ENCODE measurements at regions of chr12 and their contacts with region 1.

Region 1: GRCh38 chr12:116559162-116559935 is at the start of gene MAP1LC3B2:
- DNase-seq: peak; percentile 85 to 91 (median 89)
- H3K4me3 ChIP-seq: peak within 1 kb of the TSS; percentile 18 to 29
- H3K4me3 Mint-ChIP-seq: peak within 1 kb of the TSS; percentile 81 to 97 (median 86)
- H3K27ac ChIP-seq: peak within 1 kb of the TSS; percentile 33
- H3K27ac Mint-ChIP-seq: peak within 1 kb of the TSS; percentile 95 to 98 (median 97)
- H3K4me1 ChIP-seq: peaks cover 47% of the 10 kb centered on the region
- H3K4me1 Mint-ChIP-seq: peaks cover 29 to 48% (median 41%) of the 10 kb centered on the region in 4 donors
- H3K27me3 ChIP-seq: no peaks in the 10 kb centered on the region
- H3K27me3 Mint-ChIP-seq: no peaks in the 10 kb centered on the region
- total RNA-seq, gene MAP1LC3B2: 1.7 to 2.9 TPM

Region 2: GRCh38 chr12:116358893-116359761 is 200.2 kb before region 1 on chr12:
- CTCF ChIA-PET with region 1: no interaction called
- POLR2A ChIA-PET with region 1: interaction called, 16 read pairs
- intact Hi-C with region 1: no loop called
- DNase-seq: peak; percentile 62 to 86 (median 70)
- H3K4me3 ChIP-seq: peak overlapping the region; percentile 38 to 57
- H3K4me3 Mint-ChIP-seq: peak overlapping the region; percentile 74 to 89 (median 81)
- H3K27ac ChIP-seq: peak overlapping the region; percentile 9
- H3K27ac Mint-ChIP-seq: peak overlapping the region; percentile 29 to 94 (median 88)
- H3K4me1 ChIP-seq: peaks cover 26% of the 10 kb centered on the region
- H3K4me1 Mint-ChIP-seq: peaks cover 20 to 36% (median 27%) of the 10 kb centered on the region in 4 donors
- H3K27me3 ChIP-seq: no peaks in the 10 kb centered on the region
- H3K27me3 Mint-ChIP-seq: no peaks in the 10 kb centered on the region

Region 3: DNA sequence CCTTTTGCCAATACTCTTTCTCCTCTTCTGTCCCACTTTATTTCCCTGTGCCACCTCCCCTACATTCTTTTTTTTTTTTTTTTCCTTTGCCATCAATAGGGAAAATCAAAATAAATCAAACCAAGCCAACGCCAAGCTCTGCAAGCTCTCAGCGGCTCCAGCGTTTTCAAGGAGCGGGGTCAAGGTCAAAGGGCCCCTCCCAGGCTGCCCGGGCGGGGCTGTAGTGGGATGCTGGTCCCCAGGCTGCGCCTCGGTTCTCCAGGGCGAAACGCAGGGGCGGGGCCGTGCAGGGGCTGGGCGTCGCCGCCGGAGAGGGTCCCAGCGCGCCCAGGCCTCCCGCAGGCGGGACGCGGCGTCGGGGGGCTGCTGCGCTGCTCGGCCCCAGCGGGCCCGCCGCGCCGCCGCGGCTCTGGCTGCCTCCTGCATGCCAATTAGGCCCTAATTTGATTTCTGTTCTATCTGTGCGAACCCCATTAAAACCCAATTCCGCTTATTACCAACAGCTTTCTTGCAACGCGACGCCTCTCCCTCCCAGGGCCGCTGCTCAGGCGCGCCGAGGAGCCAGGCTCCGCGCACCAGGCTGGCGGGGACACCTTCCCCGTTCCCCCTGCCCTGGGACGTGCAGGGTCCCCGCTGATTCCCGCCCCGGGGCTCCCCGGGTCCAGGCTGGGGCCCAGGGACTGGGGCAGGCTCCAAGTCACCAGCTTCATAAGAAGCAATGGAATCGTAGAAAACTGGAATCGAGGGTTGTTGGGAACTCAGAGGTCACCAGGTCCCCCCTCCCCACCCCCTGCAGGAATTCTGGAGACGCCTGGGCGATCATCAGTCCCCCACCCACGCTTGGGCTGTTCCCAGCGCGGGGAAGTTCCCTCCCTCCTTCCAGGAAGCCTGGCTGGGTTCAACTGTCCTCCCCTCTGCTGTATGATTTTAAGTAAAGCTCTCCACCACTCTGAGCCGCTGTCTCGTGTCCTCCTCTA is 50.9 kb before region 1 on chr12:
- CTCF ChIA-PET with region 1: no interaction called
- POLR2A ChIA-PET with region 1: interaction called, 11 read pairs
- intact Hi-C with region 1: no loop called
- DNase-seq: peak in 3 of 5 donors; percentile 1 to 11 (median 6)
- H3K4me3 ChIP-seq: no peak overlapping the region
- H3K4me3 Mint-ChIP-seq: peak overlapping the region; percentile 21 to 75 (median 60)
- H3K27ac ChIP-seq: no peak overlapping the region
- H3K27ac Mint-ChIP-seq: no peak overlapping the region
- H3K4me1 ChIP-seq: peaks cover 4% of the 10 kb centered on the region
- H3K4me1 Mint-ChIP-seq: peaks cover 3 to 13% (median 6%) of the 10 kb centered on the region in 4 donors
- H3K27me3 ChIP-seq: no peaks in the 10 kb centered on the region
- H3K27me3 Mint-ChIP-seq: peaks cover 0 to 12% of the 10 kb centered on the region in 2 donors

Region 4: GRCh38 chr12:116533343-116534251 is 25.8 kb before region 1 on chr12:
- CTCF ChIA-PET with region 1: interaction called, 5 read pairs
- POLR2A ChIA-PET with region 1: interaction called, 43 read pairs
- intact Hi-C with region 1: loop called (anchors 1 kb)
- DNase-seq: peak; percentile 53 to 64 (median 62)
- H3K4me3 ChIP-seq: peak overlapping the region; percentile 76 to 88
- H3K4me3 Mint-ChIP-seq: peak overlapping the region; percentile 80 to 93 (median 90)
- H3K27ac ChIP-seq: no peak overlapping the region
- H3K27ac Mint-ChIP-seq: peak overlapping the region in 6 of 7 donors; percentile 48 to 87 (median 80)
- H3K4me1 ChIP-seq: peaks cover 22% of the 10 kb centered on the region
- H3K4me1 Mint-ChIP-seq: peaks cover 19 to 47% (median 32%) of the 10 kb centered on the region in 4 donors
- H3K27me3 ChIP-seq: no peaks in the 10 kb centered on the region
- H3K27me3 Mint-ChIP-seq: peaks cover 1 to 11% of the 10 kb centered on the region in 2 donors

Region 5: DNA sequence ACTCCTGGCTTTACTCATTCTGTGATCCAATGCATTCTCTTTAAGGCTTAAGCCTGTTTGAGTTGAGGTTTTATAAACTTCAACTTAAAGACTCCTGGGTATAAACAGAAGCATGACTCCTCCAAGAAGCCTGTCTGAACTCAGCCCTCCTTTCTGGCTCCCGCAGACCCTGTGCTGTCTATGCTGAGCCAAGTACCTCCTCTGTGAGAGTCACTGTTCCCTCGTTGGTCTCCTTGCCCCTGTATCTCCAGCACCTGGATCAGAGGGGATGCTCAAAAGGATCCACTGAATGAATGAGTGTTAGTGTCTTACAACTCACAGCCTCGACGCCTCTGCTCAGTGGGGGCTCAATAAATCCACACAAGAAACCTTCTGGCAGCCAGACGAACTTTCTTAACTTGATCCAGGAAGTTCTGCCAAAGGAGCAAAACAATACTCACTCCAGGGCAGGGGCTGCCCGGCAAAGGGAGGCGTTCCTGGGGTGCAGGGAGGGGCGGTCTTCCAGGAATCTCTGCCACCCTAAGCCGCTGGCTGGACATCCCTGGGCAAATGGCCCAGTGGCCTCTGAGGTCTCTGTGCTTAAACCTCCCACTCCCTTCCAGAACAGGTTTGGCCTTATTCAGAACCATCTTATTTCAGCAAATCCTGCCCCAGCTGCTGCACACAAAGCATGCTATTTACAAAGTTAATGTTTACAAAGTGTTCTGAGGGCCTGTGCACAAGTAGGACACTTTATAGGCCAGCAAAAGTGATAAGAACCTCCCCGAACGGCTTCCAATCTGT is 32.7 kb after region 1 on chr12:
- CTCF ChIA-PET with region 1: interaction called, 39 read pairs
- POLR2A ChIA-PET with region 1: interaction called, 24 read pairs
- intact Hi-C with region 1: loop called (anchors 2 kb)
- DNase-seq: no peak
- H3K4me3 ChIP-seq: no peak overlapping the region
- H3K4me3 Mint-ChIP-seq: peak overlapping the region in 1 of 8 donors; percentile 8
- H3K27ac ChIP-seq: no peak overlapping the region
- H3K27ac Mint-ChIP-seq: peak overlapping the region in 6 of 7 donors; percentile 14 to 62 (median 35)
- H3K4me1 ChIP-seq: peaks cover 30% of the 10 kb centered on the region
- H3K4me1 Mint-ChIP-seq: peaks cover 21 to 37% (median 31%) of the 10 kb centered on the region in 4 donors
- H3K27me3 ChIP-seq: no peaks in the 10 kb centered on the region
- H3K27me3 Mint-ChIP-seq: no peaks in the 10 kb centered on the region

Region 6: GRCh38 chr12:116599285-116600136 is 40.2 kb after region 1 on chr12:
- CTCF ChIA-PET with region 1: interaction called, 39 read pairs
- POLR2A ChIA-PET with region 1: interaction called, 24 read pairs
- intact Hi-C with region 1: loop called (anchors 2 kb)
- DNase-seq: peak; percentile 40 to 50 (median 47)
- H3K4me3 ChIP-seq: no peak overlapping the region
- H3K4me3 Mint-ChIP-seq: peak overlapping the region in 1 of 8 donors; percentile 45
- H3K27ac ChIP-seq: no peak overlapping the region
- H3K27ac Mint-ChIP-seq: peak overlapping the region in 1 of 7 donors; percentile 48
- H3K4me1 ChIP-seq: peaks cover 22% of the 10 kb centered on the region
- H3K4me1 Mint-ChIP-seq: peaks cover 15 to 24% (median 18%) of the 10 kb centered on the region in 4 donors
- H3K27me3 ChIP-seq: no peaks in the 10 kb centered on the region
- H3K27me3 Mint-ChIP-seq: no peaks in the 10 kb centered on the region

Region 7: DNA sequence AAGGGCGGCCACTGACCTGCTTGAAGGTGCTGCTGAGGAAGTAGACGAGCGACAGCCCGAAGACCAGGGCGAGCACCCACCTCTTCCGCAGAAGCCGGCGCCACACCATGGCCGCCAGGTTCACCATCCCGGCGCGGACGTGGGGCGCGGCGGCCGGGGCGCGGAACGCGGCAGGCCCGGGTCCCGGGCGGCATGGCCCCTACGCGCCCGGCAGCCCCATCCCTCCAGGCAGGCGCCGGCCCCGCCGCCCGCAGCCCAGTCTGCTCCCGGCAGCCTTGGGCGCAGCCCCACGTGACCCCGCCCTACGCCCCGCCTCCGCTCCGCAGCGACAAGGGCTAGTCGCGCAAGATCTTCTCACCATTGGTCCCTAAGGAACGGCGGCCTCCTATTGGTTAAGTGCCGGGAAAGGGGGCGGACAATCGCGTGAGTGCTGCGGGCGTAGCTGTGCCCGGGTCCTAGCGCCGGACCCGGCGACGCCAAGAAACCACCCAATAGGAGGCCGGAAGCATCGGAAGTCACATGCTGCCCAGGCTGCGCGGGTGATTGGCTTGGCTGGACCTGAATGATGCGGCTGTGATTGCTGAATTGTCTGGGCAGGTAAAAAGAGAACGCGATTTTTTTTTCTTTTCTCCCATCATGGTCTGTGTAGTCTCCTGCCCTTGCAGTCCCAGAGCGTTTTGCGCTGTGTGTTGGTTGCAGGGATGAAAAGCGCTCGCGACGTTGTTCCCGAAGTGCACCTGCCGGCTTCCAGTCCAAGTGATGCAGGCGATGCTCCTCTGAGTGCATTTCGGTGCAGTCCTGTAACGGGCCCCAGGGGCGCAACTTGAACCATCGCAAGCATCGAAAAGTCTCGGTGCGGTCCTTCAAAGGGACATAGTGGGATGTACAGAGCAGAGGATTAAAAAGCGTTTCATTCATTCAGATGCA is 178.7 kb after region 1 on chr12 and contains the starts of genes RNFT2 and SPRING1:
- CTCF ChIA-PET with region 1: no interaction called
- POLR2A ChIA-PET with region 1: interaction called, 3 read pairs
- intact Hi-C with region 1: loop called (anchors 1 kb)
- DNase-seq: peak; percentile 99
- H3K4me3 ChIP-seq: peak within 1 kb of the TSS; percentile 58 to 98
- H3K4me3 Mint-ChIP-seq: peak within 1 kb of the TSS; percentile 92 to 98 (median 95)
- H3K27ac ChIP-seq: peak within 1 kb of the TSS; percentile 50
- H3K27ac Mint-ChIP-seq: peak within 1 kb of the TSS; percentile 87 to 95 (median 92)
- H3K4me1 ChIP-seq: peaks cover 27% of the 10 kb centered on the region
- H3K4me1 Mint-ChIP-seq: peaks cover 17 to 48% (median 31%) of the 10 kb centered on the region in 4 donors
- H3K27me3 ChIP-seq: no peaks in the 10 kb centered on the region
- H3K27me3 Mint-ChIP-seq: no peaks in the 10 kb centered on the region
- total RNA-seq, gene RNFT2: 4.0 to 5.9 TPM
- total RNA-seq, gene SPRING1: 26.5 to 28.1 TPM

Measured in CD4-positive, alpha-beta memory T cell (primary cell).